Motor neuron (in vitro differentiated cells): ENCODE measurements at regions of chr5 and their contacts with region 1.

Region 1: DNA sequence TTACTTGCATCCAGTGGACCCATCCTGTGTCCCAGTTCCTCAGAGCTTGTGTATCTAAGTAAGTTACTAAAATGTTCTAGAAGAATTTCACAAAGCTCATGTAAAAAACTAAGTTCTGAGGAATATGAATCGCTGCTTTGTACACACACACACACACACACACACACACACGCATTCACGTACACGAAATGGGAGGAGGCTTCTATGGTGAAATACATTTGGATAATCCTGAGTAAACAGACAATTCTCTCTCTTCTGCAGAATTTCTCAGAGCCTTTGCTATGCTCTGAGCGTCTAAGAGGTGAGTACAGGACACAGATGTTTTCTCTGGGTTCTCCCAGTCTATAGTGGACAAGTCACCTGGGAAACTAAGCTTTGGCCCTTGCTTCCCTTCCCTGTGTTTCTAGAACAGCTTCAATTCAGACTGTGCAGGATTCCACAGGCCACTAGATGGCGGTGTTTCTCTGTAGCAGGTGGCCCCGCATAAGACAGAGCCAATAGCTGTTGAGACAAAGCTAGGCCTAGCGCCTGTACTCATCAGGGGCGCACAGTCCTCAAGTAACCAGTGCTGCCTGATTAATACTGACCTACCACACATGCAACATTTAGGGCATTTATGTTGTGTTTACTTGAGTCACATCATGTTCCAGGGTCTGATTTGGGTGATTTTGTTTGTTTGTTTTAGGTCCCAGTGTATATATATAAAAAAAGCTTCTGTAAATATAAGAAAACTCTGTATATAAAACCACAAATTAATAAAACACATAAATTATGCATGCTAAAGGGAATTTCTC is 114.8 kb downstream of the LIFR start:
- ATAC-seq: peak; percentile 94 to 100 (median 100)
- H3K4me3 ChIP-seq: no peak overlapping the region
- H3K27ac ChIP-seq: no peak overlapping the region
- H3K4me1 ChIP-seq: no peaks in the 10 kb centered on the region

Region 2: DNA sequence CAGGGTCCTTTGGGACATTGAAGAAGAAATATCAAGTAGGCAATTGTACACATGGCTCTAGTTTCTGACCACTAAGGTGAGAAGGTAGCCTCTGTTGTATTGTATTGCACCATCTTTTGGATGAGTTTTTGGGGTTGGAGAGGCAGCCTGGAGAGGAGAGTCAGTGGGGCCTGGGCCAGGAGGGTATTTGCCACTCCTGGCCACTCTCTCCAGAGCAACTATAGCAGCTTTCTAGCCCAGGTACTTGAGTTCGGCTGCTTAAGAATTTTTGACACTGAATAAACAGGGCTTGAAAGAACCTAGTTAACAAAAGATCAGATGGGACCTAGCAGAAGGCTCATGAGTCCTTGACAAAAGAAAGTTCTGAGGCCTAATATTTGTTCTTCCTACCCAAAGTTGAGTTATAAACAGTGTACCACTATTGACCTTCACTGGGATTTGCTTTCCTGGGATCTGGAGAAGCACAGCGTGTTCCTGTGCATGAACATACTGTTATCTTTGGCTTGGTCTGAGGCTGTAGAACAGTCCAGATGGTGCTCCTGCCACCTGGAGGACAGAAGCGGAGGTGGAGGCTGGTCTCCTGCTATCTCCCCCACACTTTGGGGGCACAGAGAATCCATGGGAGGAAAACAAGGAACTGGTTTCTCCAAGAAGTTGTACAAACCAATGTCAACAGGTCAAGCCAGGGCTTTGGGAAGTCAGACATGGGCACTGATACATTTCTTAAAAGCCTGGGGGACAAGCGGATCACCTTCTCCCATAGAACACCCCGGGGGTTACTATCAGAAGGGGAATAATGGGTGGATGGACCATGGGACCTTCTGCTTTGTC is 225.2 kb after region 1 on chr5:
- in situ Hi-C with region 1: loop called in 2 of 9 experiments (anchors 25 kb)
- ATAC-seq: peak in 4 of 8 experiments; percentile 23 to 42 (median 32)
- H3K4me3 ChIP-seq: no peak overlapping the region
- H3K27ac ChIP-seq: no peak overlapping the region
- H3K4me1 ChIP-seq: no peaks in the 10 kb centered on the region